ENCODE measurements at regions of chr5 and their contacts with region 1.

Region 1: DNA sequence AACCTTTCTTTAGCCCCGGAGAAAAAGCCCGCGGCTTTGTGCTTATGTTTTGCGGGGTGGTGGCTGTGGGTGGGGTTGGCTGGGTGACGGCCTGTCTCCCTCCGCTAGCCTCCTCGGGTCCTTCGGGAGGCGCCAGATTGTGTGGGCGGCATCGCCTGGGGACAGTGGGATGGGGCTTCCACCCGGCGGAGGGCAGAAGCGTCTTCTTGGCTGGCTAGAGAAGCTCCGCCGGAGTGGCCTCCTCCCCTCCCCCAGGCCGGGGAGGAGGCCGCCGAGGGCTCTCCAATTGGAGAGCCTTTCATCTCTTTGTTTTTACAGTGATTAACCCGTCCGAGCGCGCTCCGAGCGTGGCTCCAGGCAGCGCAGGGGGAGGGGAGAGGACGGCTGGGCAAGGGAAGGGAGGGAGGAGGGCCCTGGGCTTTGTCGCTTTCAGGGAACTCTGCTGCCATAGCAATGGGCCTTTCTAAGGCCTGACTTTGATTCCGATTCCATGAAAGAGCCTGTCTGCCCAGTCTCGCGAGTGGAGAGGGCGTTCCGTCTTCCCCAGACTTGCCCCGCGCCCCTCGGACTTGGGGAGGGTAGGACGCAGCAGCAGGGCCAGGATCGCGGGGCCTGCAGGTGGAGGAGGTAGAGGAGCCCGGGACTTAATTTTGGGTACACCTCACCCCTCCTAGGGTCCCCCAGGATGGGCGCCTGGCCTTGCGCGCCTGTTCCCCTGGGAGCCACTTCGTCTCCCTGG is 36.7 kb upstream of the TIFAB start:
- DNase-seq: peak; percentile 83
- H3K4me3 ChIP-seq: peak overlapping the region; percentile 34
- H3K4me3 Mint-ChIP-seq: peak overlapping the region; percentile 72
- H3K27ac Mint-ChIP-seq: peak overlapping the region; percentile 67
- H3K4me1 ChIP-seq: peaks cover 44% of the 10 kb centered on the region
- H3K4me1 Mint-ChIP-seq: peaks cover 30% of the 10 kb centered on the region
- H3K27me3 ChIP-seq: no peaks in the 10 kb centered on the region
- H3K27me3 Mint-ChIP-seq: no peaks in the 10 kb centered on the region
- CTCF ChIP-seq: no peak

Region 2: DNA sequence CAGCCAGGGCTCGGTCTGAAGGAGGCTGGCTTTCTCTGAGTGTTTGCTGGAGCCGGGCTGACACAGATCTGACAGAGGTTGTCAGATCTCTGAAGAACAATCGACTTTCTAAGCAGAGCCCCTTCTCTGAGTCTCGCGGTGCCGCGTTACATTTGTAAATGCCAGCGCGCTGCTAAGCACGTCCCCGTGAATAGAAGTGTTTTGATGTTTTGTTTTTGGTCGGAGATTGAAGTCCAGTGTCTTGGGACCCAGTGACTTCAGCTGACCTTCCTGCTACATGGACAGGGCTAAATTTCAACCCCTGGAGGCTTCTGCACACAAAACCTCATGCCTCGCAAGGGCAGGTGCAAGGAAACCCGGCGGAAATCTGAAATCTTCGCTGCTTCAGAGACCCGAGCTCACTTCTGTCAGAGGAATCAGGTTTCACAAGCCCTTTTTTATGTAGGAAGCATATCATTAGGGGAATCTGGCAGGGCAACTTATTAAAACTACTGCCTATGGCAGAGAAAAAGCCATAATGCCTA is 19.6 kb after region 1 on chr5:
- CTCF ChIA-PET with region 1: no interaction called
- POLR2A ChIA-PET with region 1: interaction called, 3 read pairs
- intact Hi-C with region 1: loop called (anchors 1 kb)
- DNase-seq: peak in 1 of 2 experiments; percentile 28
- H3K4me3 ChIP-seq: peak overlapping the region; percentile 20; the same call in 1 of the 2 replicates
- H3K4me3 Mint-ChIP-seq: peak overlapping the region; percentile 60
- H3K27ac Mint-ChIP-seq: no peak overlapping the region
- H3K4me1 ChIP-seq: peaks cover 8% of the 10 kb centered on the region; the same call in 1 of the 2 replicates
- H3K4me1 Mint-ChIP-seq: peaks cover 4% of the 10 kb centered on the region
- H3K27me3 ChIP-seq: no peaks in the 10 kb centered on the region; the same call in 1 of the 2 replicates
- H3K27me3 Mint-ChIP-seq: peaks cover 8% of the 10 kb centered on the region
- CTCF ChIP-seq: no peak

Measured in Caco-2 (cell line).